ENCODE measurements at regions of chr10 and their contacts with region 1.

Region 1: DNA sequence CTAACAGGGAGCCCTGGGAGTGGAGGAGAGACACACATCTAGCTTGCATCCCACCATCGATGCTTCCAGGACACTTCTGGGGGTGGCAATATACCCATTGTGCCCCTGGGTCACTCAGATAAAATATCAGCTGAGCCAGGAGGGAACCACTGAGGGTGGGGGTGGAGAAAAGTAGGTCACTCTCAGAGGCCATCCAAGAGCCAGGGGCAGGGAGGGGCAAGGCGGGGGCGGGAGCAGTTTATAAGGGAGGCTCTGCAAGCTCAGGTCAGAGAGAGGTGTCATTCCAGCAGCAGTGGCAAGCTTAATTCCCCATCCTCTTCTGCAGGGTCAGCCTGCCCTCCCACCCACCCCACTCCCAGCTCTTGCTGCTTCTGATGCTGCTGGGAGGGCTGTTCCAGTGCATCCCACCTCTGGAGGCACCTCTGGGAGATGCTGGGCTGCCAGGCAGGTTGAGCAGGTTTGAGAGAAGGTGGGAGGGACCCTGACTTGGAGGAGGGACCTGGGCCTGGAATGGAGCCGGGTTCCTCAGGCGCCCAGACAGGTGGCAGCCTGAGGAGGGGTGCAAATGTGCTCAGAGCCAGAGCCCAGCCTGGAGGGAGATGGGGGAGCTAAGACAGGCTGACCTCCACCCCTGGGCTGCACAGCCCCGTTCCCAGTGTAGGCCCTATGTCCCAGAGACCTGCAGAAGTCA is 20.1 kb upstream of the TLX1 start:
- DNase-seq: peak; percentile 45
- H3K27ac ChIP-seq: no peak overlapping the region
- CTCF ChIP-seq: no peak

Region 2: DNA sequence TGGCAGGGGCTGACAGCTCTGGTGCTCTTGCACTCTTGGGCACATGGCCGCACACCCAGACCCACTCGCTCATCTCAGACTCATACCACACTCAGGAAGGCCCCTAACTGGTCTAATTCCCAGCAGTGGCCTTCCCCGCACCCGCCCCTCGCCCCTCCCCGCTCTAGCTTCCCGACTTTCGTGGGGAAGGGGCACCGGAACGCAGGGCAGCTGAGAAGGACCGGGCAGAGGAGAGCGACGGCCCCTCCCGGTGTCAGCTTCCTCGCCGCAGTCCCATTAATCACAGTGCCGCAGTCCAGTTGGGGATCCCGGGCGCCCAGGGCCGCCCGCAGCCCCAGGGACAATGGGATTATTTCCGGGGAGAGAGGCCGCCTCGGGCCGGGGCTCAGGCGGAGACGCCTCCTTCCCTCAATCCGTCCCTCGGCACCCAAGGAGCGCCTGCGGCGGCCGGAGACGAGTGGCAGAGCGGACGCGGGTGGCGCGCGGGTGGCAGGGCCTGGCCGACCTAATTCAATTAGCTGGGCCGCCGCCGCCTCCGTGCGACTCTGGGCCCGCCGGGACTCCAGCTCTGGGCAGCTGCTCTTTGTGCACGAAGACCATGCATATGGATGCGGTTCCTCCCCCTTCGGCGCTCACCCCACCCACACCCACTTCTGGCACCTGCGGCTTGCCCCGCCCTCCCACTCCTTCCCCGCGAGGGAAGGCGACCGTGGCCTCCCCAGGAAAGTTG is 12.2 kb after region 1 on chr10:
- CTCF ChIA-PET with region 1: no interaction called
- POLR2A ChIA-PET with region 1: interaction called, 12 read pairs
- DNase-seq: no peak
- H3K27ac ChIP-seq: no peak overlapping the region
- CTCF ChIP-seq: no peak

Region 3: GRCh38 chr10:101176577-101176976 is 65.6 kb after region 1 on chr10:
- CTCF ChIA-PET with region 1: no interaction called
- POLR2A ChIA-PET with region 1: no interaction called
- DNase-seq: no peak
- H3K27ac ChIP-seq: no peak overlapping the region
- CTCF ChIP-seq: no peak